Activated T-helper 2 cell treated with anti-CD3 and anti-CD28 coated beads, Interferon-gamma antibody, Interleukin-2, Interleukin-4, amounts not matched to agents 10 μg/mL and 5 μg/mL and 100 μg/mL, durations not matched to agents 14 hours and 24 hours and 36 hours (primary cell): ENCODE measurements at regions of chr22 and their contacts with region 1.

Region 1: DNA sequence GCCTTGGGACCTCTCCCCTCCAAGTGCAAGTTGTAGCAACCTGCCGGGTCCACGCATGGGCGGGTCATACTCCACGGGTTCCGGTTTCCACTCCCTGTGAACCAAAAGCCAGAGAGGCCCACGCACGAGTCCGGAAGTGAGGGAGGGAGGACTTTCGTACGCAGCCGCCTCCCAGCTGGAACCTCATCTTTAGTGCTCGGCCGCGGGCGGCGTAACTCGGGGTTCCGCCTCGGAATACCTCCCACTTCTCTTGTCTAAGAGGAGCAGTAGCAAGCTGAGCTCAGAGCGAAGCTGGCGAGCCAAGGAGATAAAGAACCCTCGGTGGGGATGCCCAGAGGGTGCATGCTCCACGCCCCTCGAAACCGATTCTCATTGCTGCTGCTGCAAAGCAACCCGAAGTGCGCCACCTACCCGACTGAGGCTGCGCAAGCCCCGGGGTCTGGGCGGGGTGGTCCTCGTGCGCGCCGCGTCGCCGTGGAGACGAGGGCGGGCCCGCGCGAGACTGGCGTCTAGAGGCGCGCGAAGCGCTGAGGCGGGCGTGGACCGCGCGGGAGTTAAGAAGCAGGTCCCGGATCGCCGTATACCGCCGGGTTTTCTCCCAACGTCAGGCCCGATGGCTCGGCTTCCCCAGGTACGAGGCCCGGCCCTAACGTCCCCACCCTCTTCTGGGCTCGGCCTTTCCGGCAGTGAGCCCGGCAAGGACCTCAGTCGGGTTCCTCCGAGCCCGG is at the start of gene SFI1:
- DNase-seq: peak; percentile 92
- H3K4me3 Mint-ChIP-seq: peak within 1 kb of the TSS; percentile 98
- H3K27ac Mint-ChIP-seq: peak within 1 kb of the TSS; percentile 96
- H3K4me1 Mint-ChIP-seq: peaks cover 29% of the 10 kb centered on the region
- H3K27me3 Mint-ChIP-seq: no peaks in the 10 kb centered on the region
- total RNA-seq, gene SFI1: 409 and 435 TPM in 2 replicates

Region 2: GRCh38 chr22:31345331-31346254 is 150.6 kb before region 1 on chr22:
- intact Hi-C with region 1: loop called (anchors 2 kb)
- DNase-seq: peak; percentile 85
- H3K4me3 Mint-ChIP-seq: peak overlapping the region; percentile 88
- H3K27ac Mint-ChIP-seq: peak overlapping the region; percentile 83
- H3K4me1 Mint-ChIP-seq: peaks cover 37% of the 10 kb centered on the region
- H3K27me3 Mint-ChIP-seq: no peaks in the 10 kb centered on the region

Region 3: GRCh38 chr22:31526270-31526669 is 30.1 kb after region 1 on chr22:
- intact Hi-C with region 1: loop called (anchors 1 kb)
- DNase-seq: no peak
- H3K4me3 Mint-ChIP-seq: no peak overlapping the region
- H3K27ac Mint-ChIP-seq: peak overlapping the region; percentile 96
- H3K4me1 Mint-ChIP-seq: peaks cover 58% of the 10 kb centered on the region
- H3K27me3 Mint-ChIP-seq: no peaks in the 10 kb centered on the region

Region 4: GRCh38 chr22:31537019-31537535 is 40.9 kb after region 1 on chr22:
- intact Hi-C with region 1: loop called (anchors 1 kb)
- DNase-seq: peak; percentile 26
- H3K4me3 Mint-ChIP-seq: peak overlapping the region; percentile 64
- H3K27ac Mint-ChIP-seq: peak overlapping the region; percentile 99
- H3K4me1 Mint-ChIP-seq: peaks cover 60% of the 10 kb centered on the region
- H3K27me3 Mint-ChIP-seq: no peaks in the 10 kb centered on the region

Region 5: DNA sequence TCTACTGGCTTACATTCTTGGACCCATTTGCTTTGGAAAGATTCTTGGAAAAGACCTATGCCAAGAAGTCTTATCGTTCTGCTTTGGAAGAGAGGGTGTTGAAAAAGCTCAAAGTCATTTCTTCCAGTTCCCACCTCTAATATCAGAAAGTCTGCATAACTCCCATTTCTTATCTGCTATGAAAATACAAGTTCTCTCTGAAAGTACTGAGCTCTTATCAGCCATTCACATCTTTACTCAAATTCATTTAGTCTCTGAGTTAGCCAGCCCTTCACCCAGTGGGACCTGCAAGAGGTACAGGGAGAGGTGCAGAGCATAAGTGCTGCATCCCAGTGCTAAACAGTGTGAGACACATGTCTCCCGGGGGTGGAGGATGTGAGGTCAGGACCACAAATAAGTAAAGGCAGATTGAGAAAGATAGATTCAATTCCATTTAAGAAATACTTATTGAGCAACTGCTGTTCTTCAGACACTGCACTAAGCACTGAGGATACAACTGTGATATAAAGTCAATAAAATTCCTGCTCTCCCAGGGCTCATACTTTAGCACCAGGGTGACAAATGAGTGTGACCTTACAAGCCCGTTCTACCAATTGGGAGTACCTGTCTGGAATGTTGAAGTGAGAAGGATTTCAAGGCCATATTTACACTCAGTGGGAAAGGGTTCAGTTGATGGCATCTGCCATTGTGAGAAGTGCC is 89.1 kb after region 1 on chr22:
- intact Hi-C with region 1: loop called (anchors 2 kb)
- DNase-seq: peak; percentile 20
- H3K4me3 Mint-ChIP-seq: peak overlapping the region; percentile 20
- H3K27ac Mint-ChIP-seq: peak overlapping the region; percentile 81
- H3K4me1 Mint-ChIP-seq: peaks cover 51% of the 10 kb centered on the region
- H3K27me3 Mint-ChIP-seq: no peaks in the 10 kb centered on the region

Region 6: DNA sequence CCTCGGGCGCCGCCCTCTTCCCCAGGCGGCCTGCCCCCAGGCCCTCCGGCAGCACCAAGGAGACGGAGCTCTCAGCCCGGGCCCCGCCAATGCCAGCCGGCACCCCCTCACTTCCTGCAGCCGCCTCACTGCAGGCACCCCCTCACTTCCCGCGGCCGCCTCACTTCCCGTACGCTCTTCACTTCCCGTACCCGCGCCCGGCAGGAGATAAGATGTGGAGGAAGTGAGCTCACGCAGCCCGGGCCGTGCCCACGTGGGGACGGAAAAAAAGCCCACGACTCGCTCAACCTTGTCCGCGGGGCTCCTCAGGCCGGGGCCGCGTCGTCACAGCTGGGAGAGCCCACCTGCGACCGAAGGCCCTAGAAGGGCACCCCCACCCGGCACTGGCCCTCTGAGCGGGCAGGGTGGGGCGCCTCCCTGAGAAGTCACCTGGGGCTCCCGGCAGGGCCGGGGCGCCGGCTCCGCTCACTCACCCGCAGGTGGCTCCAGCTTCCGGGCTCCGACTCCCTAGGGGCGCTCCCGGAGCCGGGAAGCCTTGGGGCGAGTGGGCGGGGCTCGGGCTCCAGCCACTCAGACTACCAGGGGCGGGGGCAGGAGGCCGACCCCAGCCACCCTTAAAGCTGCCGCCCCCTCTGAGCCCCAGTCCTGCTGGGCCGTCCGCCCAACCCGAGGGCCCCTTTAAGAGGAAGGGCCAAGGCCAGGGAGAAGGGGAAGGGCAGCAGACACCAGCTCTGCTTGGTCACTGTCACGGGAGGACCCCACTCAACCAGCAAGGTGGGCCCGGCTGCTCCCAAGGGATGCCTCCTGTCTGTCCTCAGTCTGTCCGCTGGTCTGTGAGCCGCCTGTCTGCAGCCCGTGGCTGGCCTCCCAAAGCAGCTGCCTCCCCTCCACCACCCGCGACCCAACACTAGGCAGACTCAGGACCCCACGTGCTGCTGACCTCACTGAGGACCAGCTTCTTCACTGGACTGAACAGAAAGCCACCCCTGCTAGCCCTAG is 134.5 kb after region 1 on chr22:
- intact Hi-C with region 1: loop called (anchors 2 kb)
- DNase-seq: peak; percentile 84
- H3K4me3 Mint-ChIP-seq: peak overlapping the region; percentile 83
- H3K27ac Mint-ChIP-seq: peak overlapping the region; percentile 85
- H3K4me1 Mint-ChIP-seq: peaks cover 34% of the 10 kb centered on the region
- H3K27me3 Mint-ChIP-seq: no peaks in the 10 kb centered on the region

Region 7: DNA sequence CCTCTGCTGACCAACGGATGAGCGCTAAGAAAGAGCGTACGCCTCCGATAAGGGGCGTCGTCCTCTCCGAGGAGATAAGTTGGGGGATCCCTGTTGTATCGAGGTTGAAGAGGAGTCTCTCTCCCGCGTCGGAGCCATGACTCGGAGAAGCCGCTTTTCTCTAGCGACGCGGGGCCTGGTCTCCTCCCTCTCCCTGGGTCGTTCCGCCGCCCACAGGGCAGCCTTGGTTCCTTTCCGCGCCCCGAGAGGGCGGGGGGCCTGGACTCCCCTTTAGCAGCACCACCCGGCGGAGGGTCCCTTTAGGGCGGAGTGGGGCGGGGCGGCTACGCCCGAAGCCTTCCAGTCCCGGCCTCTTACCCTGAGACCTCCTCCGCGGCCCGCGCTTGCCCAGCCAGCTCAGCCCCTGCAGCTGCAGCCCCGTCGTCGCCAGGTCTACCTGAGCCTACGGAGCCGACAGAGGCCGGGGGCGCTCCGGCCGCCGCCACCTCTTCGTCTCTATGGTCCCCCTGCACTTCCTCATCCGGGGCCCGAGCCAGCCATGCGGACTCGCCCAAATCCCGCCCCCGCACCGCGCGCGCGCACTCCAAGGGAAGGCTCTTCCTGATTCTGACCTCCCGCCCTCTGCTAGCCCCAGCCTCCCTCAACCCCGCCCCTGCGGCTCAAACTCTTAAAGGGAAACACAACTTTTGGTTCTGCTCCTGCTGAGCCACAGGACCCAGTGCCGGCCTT is 253.6 kb after region 1 on chr22 and contains the start of gene PRR14L:
- intact Hi-C with region 1: loop called (anchors 1 kb)
- DNase-seq: peak; percentile 98
- H3K4me3 Mint-ChIP-seq: peak within 1 kb of the TSS; percentile 94
- H3K27ac Mint-ChIP-seq: peak within 1 kb of the TSS; percentile 91
- H3K4me1 Mint-ChIP-seq: peaks cover 50% of the 10 kb centered on the region
- H3K27me3 Mint-ChIP-seq: no peaks in the 10 kb centered on the region
- total RNA-seq, gene PRR14L: 54.2 and 58.0 TPM in 2 replicates

Region 8: GRCh38 chr22:31932863-31933262 is 436.7 kb after region 1 on chr22:
- intact Hi-C with region 1: no loop called
- DNase-seq: no peak
- H3K4me3 Mint-ChIP-seq: no peak overlapping the region
- H3K27ac Mint-ChIP-seq: no peak overlapping the region
- H3K4me1 Mint-ChIP-seq: no peaks in the 10 kb centered on the region
- H3K27me3 Mint-ChIP-seq: peaks cover 21% of the 10 kb centered on the region